Lower leg skin (tissue), 4 donors: ENCODE measurements at regions of chr12 and their contacts with region 1.

Region 1: GRCh38 chr12:117367011-117367638 is 5.7 kb upstream of the NOS1 start:
- DNase-seq: peak; percentile 78 to 92
- H3K4me3 ChIP-seq: no peak overlapping the region
- CTCF ChIP-seq: peak in 1 of 3 donors; percentile 67
- POLR2A ChIP-seq: no peak

Region 2: GRCh38 chr12:117236456-117237001 is 130.6 kb before region 1 on chr12:
- intact Hi-C with region 1: loop called (anchors 10 kb)
- DNase-seq: peak; percentile 69 to 96
- H3K4me3 ChIP-seq: no peak overlapping the region
- CTCF ChIP-seq: no peak
- POLR2A ChIP-seq: no peak

Region 3: GRCh38 chr12:117377744-117378143 is 10.6 kb after region 1 on chr12:
- intact Hi-C with region 1: no loop called
- DNase-seq: no peak
- H3K4me3 ChIP-seq: no peak overlapping the region
- CTCF ChIP-seq: no peak
- POLR2A ChIP-seq: no peak

Region 4: DNA sequence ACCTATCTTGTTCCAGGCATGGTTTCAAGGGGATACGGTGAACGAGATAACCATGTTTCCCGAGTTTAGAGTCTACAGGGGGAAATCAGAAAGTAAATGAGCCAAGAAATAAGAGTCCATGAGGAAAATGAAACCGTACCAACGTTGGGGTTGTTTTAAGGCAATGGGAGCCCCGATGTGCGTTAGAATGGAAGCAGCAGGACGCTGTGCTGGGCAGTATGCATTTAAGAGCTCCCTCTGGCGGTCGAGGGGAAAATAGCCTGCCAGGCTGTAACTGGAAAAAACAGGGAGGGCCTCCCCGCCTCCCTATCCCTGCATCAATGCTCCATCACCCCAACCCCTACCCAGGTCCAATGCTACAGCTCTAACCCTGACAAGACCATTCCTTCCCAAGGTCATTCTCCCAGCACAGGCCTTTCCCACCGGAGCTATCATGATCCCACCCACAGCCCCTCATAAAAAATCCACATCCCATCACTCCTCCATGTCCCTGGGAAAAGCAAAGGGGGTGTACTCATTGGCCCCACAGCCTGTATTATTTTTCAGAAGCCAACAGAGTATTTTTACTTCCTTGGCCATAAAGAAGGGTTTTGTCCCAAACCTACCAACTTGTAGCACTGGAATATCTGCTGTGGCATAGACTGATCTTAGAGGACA is 220.6 kb after region 1 on chr12:
- intact Hi-C with region 1: loop called (anchors 5 kb)
- DNase-seq: peak in 1 of 2 donors; percentile 26
- H3K4me3 ChIP-seq: no peak overlapping the region
- CTCF ChIP-seq: peak in 1 of 3 donors; percentile 32
- POLR2A ChIP-seq: no peak

Region 5: GRCh38 chr12:117836999-117837736 is 470.0 kb after region 1 on chr12:
- intact Hi-C with region 1: loop called (anchors 5 kb)
- DNase-seq: peak; percentile 74 to 96
- H3K4me3 ChIP-seq: no peak overlapping the region
- CTCF ChIP-seq: peak in 1 of 3 donors; percentile 87
- POLR2A ChIP-seq: no peak